GM23248 (cell line): ENCODE measurements at regions of chr7 and their contacts with region 1.

Region 1: DNA sequence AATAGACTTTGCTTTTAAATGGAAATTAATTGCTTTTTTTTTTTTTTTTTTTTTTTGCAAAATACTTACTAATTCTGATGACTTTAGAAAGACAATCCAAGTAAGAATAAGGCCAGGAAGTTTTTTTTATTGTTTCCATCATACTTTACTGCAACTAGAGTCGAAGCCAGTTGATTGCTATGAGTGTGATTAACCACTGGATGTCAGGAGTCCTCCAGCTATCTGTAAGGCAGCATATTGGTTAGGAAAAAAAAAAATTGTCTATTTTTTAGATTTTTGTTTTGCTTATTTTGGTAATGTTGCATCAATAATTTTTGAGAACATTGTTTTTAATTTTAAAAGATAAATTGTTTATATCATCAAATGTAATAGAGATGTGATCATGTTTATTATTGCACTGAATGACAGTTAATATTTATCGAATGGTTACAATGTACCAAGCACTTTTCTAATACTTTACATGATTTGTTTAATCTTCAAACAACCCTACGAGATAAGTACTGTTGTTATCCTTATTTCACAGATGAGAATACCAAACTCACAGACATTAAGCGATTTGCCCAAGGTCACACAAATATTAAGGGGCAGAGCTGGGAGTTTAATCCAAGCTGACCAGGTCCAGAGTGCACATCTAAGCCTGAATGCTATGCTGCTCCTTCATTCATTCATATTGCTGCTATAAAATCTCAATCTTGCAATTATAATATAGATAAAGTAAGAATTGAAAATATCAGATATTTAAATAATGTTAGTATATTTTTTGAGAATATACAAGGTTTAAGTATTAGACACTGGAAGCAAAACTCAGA is 19.9 kb upstream of the LMOD2 start:
- DNase-seq: peak; percentile 75
- H3K4me3 ChIP-seq: no peak overlapping the region
- H3K27ac ChIP-seq: no peak overlapping the region
- H3K4me1 ChIP-seq: peaks cover 17% of the 10 kb centered on the region
- H3K27me3 ChIP-seq: no peaks in the 10 kb centered on the region

Region 2: GRCh38 chr7:123865517-123866117 is 229.9 kb after region 1 on chr7:
- in situ Hi-C with region 1: loop called (anchors 10 kb)
- DNase-seq: peak; percentile 66
- H3K4me3 ChIP-seq: no peak overlapping the region
- H3K27ac ChIP-seq: no peak overlapping the region
- H3K4me1 ChIP-seq: no peaks in the 10 kb centered on the region
- H3K27me3 ChIP-seq: peaks cover 12% of the 10 kb centered on the region